Panc1 (cell line): ENCODE measurements at regions of chr1 and their contacts with region 1.

Region 1: GRCh38 chr1:94801919-94802546 is 18.1 kb upstream of the SLC44A3 start:
- DNase-seq: peak; percentile 12
- ATAC-seq: peak; percentile 94
- H3K4me3 ChIP-seq: peak overlapping the region; percentile 18 to 32; a peak in 3 of 4 replicates
- H3K27ac ChIP-seq: peak overlapping the region; percentile 70
- H3K4me1 ChIP-seq: peaks cover 10% of the 10 kb centered on the region; the same call in 1 of the 2 replicates
- H3K27me3 ChIP-seq: no peaks in the 10 kb centered on the region
- CTCF ChIP-seq: peak; percentile 63

Region 2: GRCh38 chr1:94481473-94481933 is 320.5 kb before region 1 on chr1:
- CTCF ChIA-PET with region 1: no interaction called
- POLR2A ChIA-PET with region 1: no interaction called
- in situ Hi-C with region 1: no loop called
- intact Hi-C with region 1: loop called (anchors 5 kb)
- DNase-seq: peak; percentile 43
- ATAC-seq: peak; percentile 90
- H3K4me3 ChIP-seq: no peak overlapping the region
- H3K27ac ChIP-seq: no peak overlapping the region
- H3K4me1 ChIP-seq: no peaks in the 10 kb centered on the region
- H3K27me3 ChIP-seq: no peaks in the 10 kb centered on the region
- CTCF ChIP-seq: peak; percentile 80

Region 3: GRCh38 chr1:94514095-94514727 is 287.8 kb before region 1 on chr1:
- CTCF ChIA-PET with region 1: interaction called, 11 read pairs
- POLR2A ChIA-PET with region 1: no interaction called
- in situ Hi-C with region 1: no loop called
- intact Hi-C with region 1: loop called (anchors 1 kb)
- DNase-seq: peak; percentile 10
- ATAC-seq: peak; percentile 74; the same call in 1 of the 2 replicates
- H3K4me3 ChIP-seq: no peak overlapping the region
- H3K27ac ChIP-seq: no peak overlapping the region
- H3K4me1 ChIP-seq: no peaks in the 10 kb centered on the region; the same call in 1 of the 2 replicates
- H3K27me3 ChIP-seq: no peaks in the 10 kb centered on the region
- CTCF ChIP-seq: peak; percentile 76

Region 4: GRCh38 chr1:94524531-94524930 is 277.5 kb before region 1 on chr1:
- CTCF ChIA-PET with region 1: no interaction called
- POLR2A ChIA-PET with region 1: no interaction called
- in situ Hi-C with region 1: no loop called
- intact Hi-C with region 1: no loop called
- DNase-seq: no peak
- ATAC-seq: no peak
- H3K4me3 ChIP-seq: no peak overlapping the region
- H3K27ac ChIP-seq: no peak overlapping the region
- H3K4me1 ChIP-seq: no peaks in the 10 kb centered on the region
- H3K27me3 ChIP-seq: no peaks in the 10 kb centered on the region
- CTCF ChIP-seq: no peak